Ascending aorta (tissue), 2 donors: ENCODE measurements at regions of chr10 and their contacts with region 1.

Region 1: GRCh38 chr10:129963641-129964501 is at the start of gene EBF3:
- DNase-seq: peak in 1 of 2 donors; percentile 84
- H3K4me3 ChIP-seq: peak within 1 kb of the TSS; percentile 70 to 84
- H3K27ac ChIP-seq: peak within 1 kb of the TSS; percentile 48 to 54
- H3K4me1 ChIP-seq: peaks cover 10 to 16% of the 10 kb centered on the region in 2 donors
- H3K27me3 ChIP-seq: peaks cover 60% of the 10 kb centered on the region
- CTCF ChIP-seq: no peak
- total RNA-seq, gene EBF3: 20.2 TPM

Region 2: DNA sequence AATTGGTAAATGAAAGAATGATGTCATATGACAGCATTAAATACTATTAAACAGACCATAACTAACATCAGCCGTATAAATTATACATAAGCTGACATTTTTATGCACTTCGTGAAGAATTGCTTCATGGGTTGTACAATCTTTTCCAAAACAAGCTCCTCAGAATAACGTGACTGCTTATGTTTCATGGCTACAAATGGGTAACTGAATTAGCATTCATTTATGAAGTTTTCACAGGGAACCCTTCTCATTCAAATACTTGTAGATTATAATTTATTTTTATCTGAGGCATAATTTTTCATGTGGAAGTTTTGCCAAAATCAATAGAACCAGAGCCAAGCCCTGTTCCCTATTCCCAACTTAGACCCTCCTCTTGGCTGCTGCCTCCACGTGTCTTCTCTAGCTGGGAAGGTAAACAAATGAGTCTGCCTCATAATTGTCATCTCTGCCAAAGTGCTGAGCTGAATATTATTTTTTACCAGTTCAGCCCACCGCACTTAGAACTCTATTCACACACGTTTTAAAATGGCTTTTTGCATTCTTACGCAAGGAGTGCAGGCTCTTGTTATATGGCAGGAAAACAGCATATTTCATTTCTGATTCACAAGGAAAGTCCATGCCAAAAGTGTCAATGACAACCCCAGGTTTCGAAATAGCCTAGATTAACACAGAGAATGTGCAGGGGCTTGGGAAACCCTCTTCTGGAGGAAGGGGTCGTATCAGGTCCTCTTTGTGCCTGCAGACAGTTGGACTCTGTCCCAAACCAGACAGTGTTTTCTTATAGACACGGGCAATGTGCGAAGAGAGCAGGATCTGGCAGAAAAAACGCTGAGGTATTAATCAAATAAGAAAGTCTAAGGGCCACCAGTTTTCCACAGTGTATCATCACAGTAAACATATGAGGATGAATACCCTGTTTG is 867.5 kb before region 1 on chr10:
- intact Hi-C with region 1: loop called (anchors 5 kb)
- DNase-seq: peak in 1 of 2 donors; percentile 79
- H3K4me3 ChIP-seq: no peak overlapping the region
- H3K27ac ChIP-seq: peak overlapping the region; percentile 55
- H3K4me1 ChIP-seq: peaks cover 0 to 14% of the 10 kb centered on the region in 2 donors
- H3K27me3 ChIP-seq: no peaks in the 10 kb centered on the region
- CTCF ChIP-seq: no peak

Region 3: DNA sequence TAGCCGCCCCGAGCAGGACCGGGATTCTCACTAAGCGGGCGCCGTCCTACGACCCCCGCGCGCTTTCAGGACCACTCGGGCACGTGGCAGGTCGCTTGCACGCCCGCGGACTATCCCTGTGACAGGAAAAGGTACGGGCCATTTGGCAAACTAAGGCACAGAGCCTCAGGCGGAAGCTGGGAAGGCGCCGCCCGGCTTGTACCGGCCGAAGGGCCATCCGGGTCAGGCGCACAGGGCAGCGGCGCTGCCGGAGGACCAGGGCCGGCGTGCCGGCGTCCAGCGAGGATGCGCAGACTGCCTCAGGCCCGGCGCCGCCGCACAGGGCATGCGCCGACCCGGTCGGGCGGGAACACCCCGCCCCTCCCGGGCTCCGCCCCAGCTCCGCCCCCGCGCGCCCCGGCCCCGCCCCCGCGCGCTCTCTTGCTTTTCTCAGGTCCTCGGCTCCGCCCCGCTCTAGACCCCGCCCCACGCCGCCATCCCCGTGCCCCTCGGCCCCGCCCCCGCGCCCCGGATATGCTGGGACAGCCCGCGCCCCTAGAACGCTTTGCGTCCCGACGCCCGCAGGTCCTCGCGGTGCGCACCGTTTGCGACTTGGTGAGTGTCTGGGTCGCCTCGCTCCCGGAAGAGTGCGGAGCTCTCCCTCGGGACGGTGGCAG is 497.0 kb before region 1 on chr10 and contains the start of gene MGMT:
- intact Hi-C with region 1: loop called (anchors 5 kb)
- DNase-seq: peak; percentile 79 to 97
- H3K4me3 ChIP-seq: peak within 1 kb of the TSS; percentile 59 to 74
- H3K27ac ChIP-seq: peak within 1 kb of the TSS; percentile 78 to 88
- H3K4me1 ChIP-seq: peaks cover 5 to 9% of the 10 kb centered on the region in 2 donors
- H3K27me3 ChIP-seq: no peaks in the 10 kb centered on the region
- CTCF ChIP-seq: no peak
- total RNA-seq, gene MGMT: 7.0 TPM

Region 4: GRCh38 chr10:129808092-129808983 is 155.5 kb before region 1 on chr10:
- intact Hi-C with region 1: no loop called
- DNase-seq: no peak
- H3K4me3 ChIP-seq: no peak overlapping the region
- H3K27ac ChIP-seq: no peak overlapping the region
- H3K4me1 ChIP-seq: no peaks in the 10 kb centered on the region
- H3K27me3 ChIP-seq: no peaks in the 10 kb centered on the region
- CTCF ChIP-seq: no peak

Region 5: GRCh38 chr10:130136226-130137089 is 172.6 kb after region 1 on chr10 and contains the start of gene GLRX3:
- intact Hi-C with region 1: loop called (anchors 5 kb)
- DNase-seq: peak; percentile 42 to 93
- H3K4me3 ChIP-seq: peak within 1 kb of the TSS; percentile 95 to 98
- H3K27ac ChIP-seq: peak within 1 kb of the TSS; percentile 77 to 82
- H3K4me1 ChIP-seq: peaks cover 10 to 25% of the 10 kb centered on the region in 2 donors
- H3K27me3 ChIP-seq: no peaks in the 10 kb centered on the region
- CTCF ChIP-seq: no peak
- total RNA-seq, gene GLRX3: 30.7 TPM